A549 (cell line): ENCODE measurements at regions of chr9 and their contacts with region 1.

Region 1: DNA sequence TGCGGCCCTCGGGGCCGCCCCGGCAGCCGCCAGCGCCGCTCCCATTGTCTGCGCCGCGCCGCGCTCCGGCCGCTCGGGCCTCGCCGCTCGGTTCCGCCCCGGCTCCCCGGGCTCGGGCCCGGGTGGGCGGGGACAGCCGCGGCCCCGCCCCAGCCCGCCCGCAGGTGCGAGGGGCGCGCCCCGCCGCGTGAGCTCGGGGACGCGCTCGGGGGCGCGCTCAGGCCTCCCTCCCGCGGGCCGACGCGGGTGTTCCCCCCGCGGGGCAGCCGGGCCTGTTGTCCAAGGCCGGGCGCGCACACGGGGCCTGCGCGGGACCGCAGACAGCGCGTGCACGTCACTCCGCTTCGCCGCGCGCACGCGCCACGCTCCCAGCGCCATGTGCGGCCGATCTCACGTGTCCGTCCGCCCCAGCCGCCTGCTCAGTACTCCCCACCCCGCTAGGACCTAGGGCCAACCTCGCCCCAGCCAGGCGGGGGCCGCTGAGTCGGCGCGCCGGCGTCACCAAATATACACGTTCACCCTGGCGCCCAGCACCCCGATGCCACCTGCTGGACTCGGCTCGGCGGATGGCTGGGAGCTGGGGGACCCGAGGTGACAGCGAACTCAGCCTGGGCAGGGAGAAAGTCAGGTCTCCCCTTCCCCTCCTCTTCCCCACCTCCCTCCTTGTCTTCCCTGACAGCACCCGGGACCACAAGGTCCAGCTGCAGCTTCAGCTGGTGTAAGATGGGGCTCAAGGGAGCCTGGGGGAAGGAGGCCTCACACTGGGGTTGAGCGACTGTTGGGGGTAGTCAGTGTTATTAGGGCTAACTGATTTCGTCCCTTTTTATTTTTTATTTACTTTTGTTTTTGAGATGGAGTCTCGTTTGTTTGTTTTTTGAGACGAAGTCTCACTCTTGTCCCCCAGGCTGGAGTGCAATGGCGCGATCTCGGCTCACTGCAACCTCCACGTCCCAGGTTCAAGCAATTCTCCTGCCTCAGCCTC is 14.3 kb downstream of the GBGT1 start:
- DNase-seq: peak; percentile 93 to 96
- ATAC-seq: peak; percentile 71 to 76
- H3K4me3 ChIP-seq: peak overlapping the region; percentile 77
- H3K27ac ChIP-seq: peak overlapping the region; percentile 88 to 96
- H3K4me1 ChIP-seq: peaks cover 25% of the 10 kb centered on the region
- CTCF ChIP-seq: peak; percentile 23; the same call in 2 of the 3 replicates
- EP300 ChIP-seq: no peak
- POLR2A ChIP-seq: peak; percentile 52
- RAD21 ChIP-seq: peak in 1 of 2 experiments; percentile 41; a peak in 3 of 5 replicates

Region 2: GRCh38 chr9:132982458-132982857 is 167.0 kb before region 1 on chr9:
- CTCF ChIA-PET with region 1: no interaction called
- POLR2A ChIA-PET with region 1: no interaction called
- DNase-seq: no peak
- ATAC-seq: no peak
- H3K4me3 ChIP-seq: no peak overlapping the region
- H3K27ac ChIP-seq: no peak overlapping the region
- H3K4me1 ChIP-seq: peaks cover 8% of the 10 kb centered on the region; the same call in 1 of the 3 replicates
- CTCF ChIP-seq: no peak
- EP300 ChIP-seq: no peak
- POLR2A ChIP-seq: no peak
- RAD21 ChIP-seq: no peak

Region 3: DNA sequence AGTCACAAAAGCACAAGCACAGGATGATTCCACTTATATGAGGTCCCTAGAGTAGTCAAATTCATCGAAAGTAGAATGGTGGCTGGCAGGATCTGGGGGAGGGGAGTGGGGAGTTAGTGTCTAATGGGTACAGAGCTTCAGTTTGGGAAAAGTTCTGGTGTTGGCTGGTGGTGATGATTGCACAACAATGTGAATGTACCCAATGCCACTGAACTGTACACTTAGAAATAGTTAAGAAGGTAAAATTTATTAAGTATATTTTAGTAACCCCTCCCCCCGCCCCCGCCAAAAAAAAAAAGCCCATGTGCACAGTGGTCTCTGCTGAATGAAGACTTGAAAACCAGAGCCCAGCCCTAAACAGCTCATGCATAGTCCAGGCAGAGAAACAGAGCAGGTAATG is 143.5 kb before region 1 on chr9:
- CTCF ChIA-PET with region 1: no interaction called
- POLR2A ChIA-PET with region 1: no interaction called
- DNase-seq: no peak
- ATAC-seq: no peak
- H3K4me3 ChIP-seq: no peak overlapping the region
- H3K27ac ChIP-seq: no peak overlapping the region
- H3K4me1 ChIP-seq: no peaks in the 10 kb centered on the region
- CTCF ChIP-seq: no peak
- EP300 ChIP-seq: no peak
- POLR2A ChIP-seq: no peak
- RAD21 ChIP-seq: no peak

Region 4: GRCh38 chr9:133023117-133023890 is 126.1 kb before region 1 on chr9:
- CTCF ChIA-PET with region 1: interaction called, 17 read pairs
- POLR2A ChIA-PET with region 1: no interaction called
- DNase-seq: peak in 1 of 2 experiments; percentile 22
- ATAC-seq: peak in 1 of 2 experiments; percentile 30; a peak in 3 of 6 replicates
- H3K4me3 ChIP-seq: no peak overlapping the region
- H3K27ac ChIP-seq: no peak overlapping the region
- H3K4me1 ChIP-seq: no peaks in the 10 kb centered on the region
- CTCF ChIP-seq: no peak
- EP300 ChIP-seq: no peak
- POLR2A ChIP-seq: no peak
- RAD21 ChIP-seq: no peak

Region 5: DNA sequence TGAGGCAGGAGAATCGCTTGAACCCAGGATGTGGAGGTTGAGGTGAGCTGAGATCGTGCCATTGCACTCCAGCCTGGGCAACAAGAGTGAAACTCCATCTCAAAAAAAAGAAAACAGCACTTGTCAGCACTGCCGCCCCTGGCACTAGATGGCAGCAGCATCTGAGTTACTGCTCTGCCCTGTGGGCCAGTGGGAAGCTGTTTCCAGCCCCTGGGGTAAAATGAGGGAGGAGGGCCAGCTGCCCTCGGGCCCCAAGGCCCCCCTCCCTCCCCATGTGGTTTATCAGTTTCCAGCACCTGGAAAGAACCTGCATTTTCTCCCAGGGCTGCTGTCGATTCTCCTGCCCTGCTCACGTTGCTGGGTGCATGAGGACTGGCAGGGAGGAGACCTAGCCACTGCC is 100.8 kb before region 1 on chr9:
- CTCF ChIA-PET with region 1: interaction called, 12 read pairs
- POLR2A ChIA-PET with region 1: no interaction called
- DNase-seq: peak; percentile 35 to 46
- ATAC-seq: peak; percentile 68 to 89; a peak in 5 of 6 replicates
- H3K4me3 ChIP-seq: no peak overlapping the region
- H3K27ac ChIP-seq: no peak overlapping the region
- H3K4me1 ChIP-seq: no peaks in the 10 kb centered on the region
- CTCF ChIP-seq: peak; percentile 40
- EP300 ChIP-seq: no peak
- POLR2A ChIP-seq: no peak
- RAD21 ChIP-seq: peak; percentile 16 to 49; a peak in 2 of 5 replicates

Region 6: GRCh38 chr9:133133681-133134418 is 15.6 kb before region 1 on chr9:
- CTCF ChIA-PET with region 1: interaction called, 200 read pairs
- POLR2A ChIA-PET with region 1: interaction called, 9 read pairs
- DNase-seq: peak; percentile 95 to 99
- ATAC-seq: peak; percentile 91 to 92
- H3K4me3 ChIP-seq: no peak overlapping the region
- H3K27ac ChIP-seq: peak overlapping the region; percentile 64 to 85; a peak in 5 of 6 replicates
- H3K4me1 ChIP-seq: peaks cover 67% of the 10 kb centered on the region
- CTCF ChIP-seq: no peak
- EP300 ChIP-seq: no peak
- POLR2A ChIP-seq: no peak
- RAD21 ChIP-seq: no peak

Region 7: GRCh38 chr9:133170716-133171559 is 21.5 kb after region 1 on chr9:
- CTCF ChIA-PET with region 1: interaction called, 20 read pairs
- POLR2A ChIA-PET with region 1: no interaction called
- DNase-seq: no peak
- ATAC-seq: peak in 1 of 2 experiments; percentile 19; a peak in 1 of 6 replicates
- H3K4me3 ChIP-seq: no peak overlapping the region
- H3K27ac ChIP-seq: no peak overlapping the region
- H3K4me1 ChIP-seq: peaks cover 25% of the 10 kb centered on the region
- CTCF ChIP-seq: no peak
- EP300 ChIP-seq: no peak
- POLR2A ChIP-seq: no peak
- RAD21 ChIP-seq: no peak